ENCODE measurements at regions of chr2 and their contacts with region 1.

Region 1: GRCh38 chr2:168961450-168962229 is 60.5 kb downstream of the G6PC2 start:
- DNase-seq: peak; percentile 55
- ATAC-seq: peak; percentile 86
- H3K4me3 Mint-ChIP-seq: no peak overlapping the region
- H3K27ac Mint-ChIP-seq: no peak overlapping the region
- H3K4me1 Mint-ChIP-seq: peaks cover 23% of the 10 kb centered on the region
- H3K27me3 Mint-ChIP-seq: no peaks in the 10 kb centered on the region
- CTCF ChIP-seq: peak; percentile 83

Region 2: GRCh38 chr2:168948621-168949212 is 12.9 kb before region 1 on chr2:
- CTCF ChIA-PET with region 1: interaction called, 20 read pairs
- POLR2A ChIA-PET with region 1: no interaction called
- intact Hi-C with region 1: no loop called
- DNase-seq: peak; percentile 5
- ATAC-seq: peak; percentile 49
- H3K4me3 Mint-ChIP-seq: no peak overlapping the region
- H3K27ac Mint-ChIP-seq: no peak overlapping the region
- H3K4me1 Mint-ChIP-seq: no peaks in the 10 kb centered on the region
- H3K27me3 Mint-ChIP-seq: no peaks in the 10 kb centered on the region
- CTCF ChIP-seq: peak; percentile 74

Region 3: GRCh38 chr2:168976034-168976654 is 14.5 kb after region 1 on chr2:
- CTCF ChIA-PET with region 1: interaction called, 13 read pairs
- POLR2A ChIA-PET with region 1: interaction called, 3 read pairs
- intact Hi-C with region 1: no loop called
- DNase-seq: peak; percentile 7
- ATAC-seq: peak; percentile 50
- H3K4me3 Mint-ChIP-seq: no peak overlapping the region
- H3K27ac Mint-ChIP-seq: no peak overlapping the region
- H3K4me1 Mint-ChIP-seq: no peaks in the 10 kb centered on the region
- H3K27me3 Mint-ChIP-seq: no peaks in the 10 kb centered on the region
- CTCF ChIP-seq: no peak

Region 4: DNA sequence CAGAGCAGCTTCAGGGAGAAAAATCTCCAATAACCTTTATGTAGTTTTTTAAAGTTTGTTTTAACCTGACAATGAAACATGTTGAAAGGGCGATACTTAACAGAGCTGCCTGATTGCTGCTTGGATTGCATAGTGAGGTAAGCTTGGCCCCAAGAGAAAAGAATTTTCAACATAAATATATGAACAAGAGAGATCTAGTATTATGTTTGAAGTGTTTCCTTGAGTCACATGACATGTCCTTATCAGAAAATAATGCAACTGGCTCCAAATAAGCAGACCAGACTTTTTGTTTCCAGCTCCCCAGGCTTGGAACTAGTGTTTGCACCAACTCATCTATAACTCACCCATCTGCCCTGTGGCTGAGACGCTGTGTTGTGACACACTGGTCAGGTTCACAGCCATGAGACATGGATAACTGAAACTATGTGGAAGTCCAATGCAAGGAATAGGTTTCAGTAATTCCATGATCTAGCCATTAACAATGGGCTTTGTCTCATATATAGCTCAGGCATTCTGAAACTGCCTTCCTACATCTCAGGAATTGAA is 24.8 kb after region 1 on chr2:
- CTCF ChIA-PET with region 1: no interaction called
- POLR2A ChIA-PET with region 1: no interaction called
- intact Hi-C with region 1: no loop called
- DNase-seq: no peak
- ATAC-seq: no peak
- H3K4me3 Mint-ChIP-seq: no peak overlapping the region
- H3K27ac Mint-ChIP-seq: no peak overlapping the region
- H3K4me1 Mint-ChIP-seq: no peaks in the 10 kb centered on the region
- H3K27me3 Mint-ChIP-seq: no peaks in the 10 kb centered on the region
- CTCF ChIP-seq: no peak

Region 5: GRCh38 chr2:169131587-169132512 is 170.2 kb after region 1 on chr2:
- CTCF ChIA-PET with region 1: interaction called, 59 read pairs
- POLR2A ChIA-PET with region 1: no interaction called
- intact Hi-C with region 1: loop called (anchors 2 kb)
- DNase-seq: no peak
- ATAC-seq: peak; percentile 96
- H3K4me3 Mint-ChIP-seq: no peak overlapping the region
- H3K27ac Mint-ChIP-seq: no peak overlapping the region
- H3K4me1 Mint-ChIP-seq: peaks cover 2% of the 10 kb centered on the region
- H3K27me3 Mint-ChIP-seq: no peaks in the 10 kb centered on the region
- CTCF ChIP-seq: peak; percentile 88

Region 6: DNA sequence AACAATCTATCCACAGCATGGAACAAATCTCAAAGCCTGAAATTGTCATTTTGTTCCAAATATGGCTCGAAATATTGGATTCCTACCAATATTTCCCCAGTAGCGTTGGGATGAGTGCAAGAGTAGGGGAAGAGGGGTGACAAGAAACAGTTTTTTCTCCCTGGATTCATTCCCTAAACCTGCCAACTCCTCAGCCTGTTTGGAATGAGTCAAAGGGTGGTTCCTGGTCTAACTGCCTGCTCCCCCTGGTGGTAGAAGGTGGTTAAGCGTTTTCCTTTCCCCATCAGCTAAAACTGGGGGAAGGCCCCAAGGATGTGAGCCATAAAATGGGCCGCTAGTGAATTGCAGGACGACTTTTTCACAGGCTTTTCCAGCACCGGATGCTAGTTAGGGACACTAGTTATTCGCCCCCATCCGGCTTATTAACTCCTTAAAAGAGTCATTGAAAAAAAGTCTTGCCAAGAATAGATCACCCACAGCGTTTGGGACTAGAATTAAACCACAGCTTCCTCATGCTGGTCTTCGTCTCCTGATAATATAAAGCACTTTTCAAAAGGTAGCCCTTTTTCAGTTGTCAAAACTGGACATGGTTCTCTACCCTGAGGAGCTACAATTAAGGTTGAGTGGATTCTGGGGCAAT is 180.2 kb after region 1 on chr2:
- CTCF ChIA-PET with region 1: interaction called, 27 read pairs
- POLR2A ChIA-PET with region 1: no interaction called
- intact Hi-C with region 1: no loop called
- DNase-seq: peak; percentile 74
- ATAC-seq: peak; percentile 79
- H3K4me3 Mint-ChIP-seq: no peak overlapping the region
- H3K27ac Mint-ChIP-seq: no peak overlapping the region
- H3K4me1 Mint-ChIP-seq: no peaks in the 10 kb centered on the region
- H3K27me3 Mint-ChIP-seq: no peaks in the 10 kb centered on the region
- CTCF ChIP-seq: peak; percentile 88